IMR-90 (cell line): ENCODE measurements at regions of chr4 and their contacts with region 1.

Region 1: DNA sequence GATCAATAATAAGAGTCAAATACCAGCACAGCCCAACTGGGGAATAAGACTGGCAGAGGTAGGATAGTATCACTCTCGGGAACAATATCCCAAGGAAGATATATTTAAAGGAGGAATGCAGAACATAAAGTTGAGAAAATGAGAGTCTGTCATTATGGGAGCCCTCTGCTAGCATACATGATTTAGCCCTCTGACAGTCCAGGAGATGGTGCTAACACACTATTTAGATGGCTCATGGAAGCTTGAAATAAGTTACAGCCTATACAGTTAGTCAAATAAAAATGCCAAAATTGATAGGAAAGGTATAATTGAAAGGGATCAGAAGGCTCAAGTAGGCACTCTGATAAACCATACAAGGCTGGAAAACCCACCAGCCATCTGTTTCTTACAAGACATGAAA is 201.0 kb upstream of the NEIL3 start:
- DNase-seq: peak; percentile 68
- ATAC-seq: peak; percentile 99
- H3K4me3 ChIP-seq: no peak overlapping the region
- H3K27ac ChIP-seq: no peak overlapping the region
- H3K4me1 ChIP-seq: no peaks in the 10 kb centered on the region
- H3K27me3 ChIP-seq: no peaks in the 10 kb centered on the region
- CTCF ChIP-seq: peak; percentile 76
- POLR2A ChIP-seq: no peak
- RAD21 ChIP-seq: peak; percentile 79

Region 2: DNA sequence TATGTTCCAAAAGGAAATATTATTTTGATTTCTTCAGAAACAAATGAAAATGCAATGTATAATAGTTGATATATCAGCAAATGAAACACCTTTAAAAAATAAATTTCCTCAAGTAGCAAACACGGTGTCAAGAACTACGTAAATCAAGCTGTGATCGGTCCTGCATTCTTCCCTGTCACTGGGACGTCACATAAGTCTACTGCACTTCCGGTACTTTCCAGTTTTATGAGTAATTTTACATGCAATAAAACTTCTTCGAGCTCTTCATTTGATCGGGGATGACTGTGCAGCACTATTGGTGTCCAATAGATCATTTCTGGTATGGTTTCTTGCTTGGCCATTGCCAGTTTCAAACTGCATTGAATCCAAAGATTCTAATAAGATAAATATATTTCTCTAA is 202.0 kb before region 1 on chr4:
- CTCF ChIA-PET with region 1: no interaction called
- POLR2A ChIA-PET with region 1: no interaction called
- dilution Hi-C with region 1: no loop called
- in situ Hi-C with region 1: no loop called
- intact Hi-C with region 1: no loop called
- DNase-seq: no peak
- ATAC-seq: no peak
- H3K4me3 ChIP-seq: no peak overlapping the region
- H3K27ac ChIP-seq: 0 out of 2 replicates have a peak overlapping the region, but pooled peaks have one; percentile 3
- H3K4me1 ChIP-seq: peaks cover 6% of the 10 kb centered on the region; the same call in 1 of the 2 replicates
- H3K27me3 ChIP-seq: no peaks in the 10 kb centered on the region
- CTCF ChIP-seq: no peak
- POLR2A ChIP-seq: no peak
- RAD21 ChIP-seq: no peak

Region 3: GRCh38 chr4:177041356-177041755 is 67.4 kb before region 1 on chr4:
- CTCF ChIA-PET with region 1: no interaction called
- POLR2A ChIA-PET with region 1: no interaction called
- dilution Hi-C with region 1: no loop called
- in situ Hi-C with region 1: no loop called
- intact Hi-C with region 1: no loop called
- DNase-seq: no peak
- ATAC-seq: no peak
- H3K4me3 ChIP-seq: no peak overlapping the region
- H3K27ac ChIP-seq: no peak overlapping the region
- H3K4me1 ChIP-seq: no peaks in the 10 kb centered on the region
- H3K27me3 ChIP-seq: no peaks in the 10 kb centered on the region
- CTCF ChIP-seq: no peak
- POLR2A ChIP-seq: no peak
- RAD21 ChIP-seq: no peak

Region 4: DNA sequence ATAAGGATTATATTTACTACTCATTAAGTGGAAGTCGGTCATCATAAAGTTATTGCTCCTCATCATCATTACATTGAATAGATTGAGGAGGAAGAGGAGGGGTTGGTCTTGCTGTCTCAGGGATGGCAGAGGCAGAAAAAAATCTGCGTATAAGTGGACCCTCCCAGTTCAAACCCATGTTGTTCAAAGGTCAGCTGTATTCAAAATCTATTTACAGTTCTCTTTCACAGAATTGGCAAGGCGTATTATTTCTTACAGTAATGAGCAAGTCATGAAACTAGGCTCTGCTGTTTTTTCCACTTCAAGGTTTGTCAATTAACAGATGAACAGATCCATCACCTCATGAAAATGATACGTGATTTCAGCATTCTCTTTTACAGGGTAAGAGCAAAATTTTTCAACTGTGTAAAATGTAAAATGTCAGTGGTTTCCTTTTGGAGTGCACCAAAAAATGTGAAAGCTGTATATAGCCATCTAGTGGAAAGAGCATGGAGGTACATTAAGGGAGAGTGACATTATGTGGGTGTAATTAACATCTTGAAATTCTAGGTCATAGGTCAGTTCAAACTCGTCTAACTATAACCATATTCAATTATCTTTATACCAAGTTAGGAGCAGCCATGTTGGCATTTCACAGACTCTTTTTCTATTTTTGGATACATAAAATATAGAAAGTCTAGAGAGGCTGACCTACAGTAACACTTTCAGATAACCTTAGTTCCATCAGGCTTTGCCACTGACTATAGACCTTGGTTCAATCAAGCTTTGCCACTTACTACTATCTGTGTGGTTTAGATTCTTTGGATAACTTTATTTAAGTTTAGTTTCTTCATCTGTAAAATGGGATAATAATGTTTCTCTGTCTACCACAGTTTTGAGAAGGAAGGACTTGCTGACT is 231.0 kb after region 1 on chr4:
- CTCF ChIA-PET with region 1: interaction called, 5 read pairs
- POLR2A ChIA-PET with region 1: no interaction called
- dilution Hi-C with region 1: no loop called
- in situ Hi-C with region 1: loop called (anchors 10 kb)
- intact Hi-C with region 1: loop called (anchors 1 kb)
- DNase-seq: peak; percentile 51
- ATAC-seq: peak; percentile 84
- H3K4me3 ChIP-seq: no peak overlapping the region
- H3K27ac ChIP-seq: no peak overlapping the region; the same call in 1 of the 2 replicates
- H3K4me1 ChIP-seq: peaks cover 2% of the 10 kb centered on the region; the same call in 1 of the 2 replicates
- H3K27me3 ChIP-seq: no peaks in the 10 kb centered on the region
- CTCF ChIP-seq: peak; percentile 79
- POLR2A ChIP-seq: no peak
- RAD21 ChIP-seq: peak; percentile 80

Region 5: DNA sequence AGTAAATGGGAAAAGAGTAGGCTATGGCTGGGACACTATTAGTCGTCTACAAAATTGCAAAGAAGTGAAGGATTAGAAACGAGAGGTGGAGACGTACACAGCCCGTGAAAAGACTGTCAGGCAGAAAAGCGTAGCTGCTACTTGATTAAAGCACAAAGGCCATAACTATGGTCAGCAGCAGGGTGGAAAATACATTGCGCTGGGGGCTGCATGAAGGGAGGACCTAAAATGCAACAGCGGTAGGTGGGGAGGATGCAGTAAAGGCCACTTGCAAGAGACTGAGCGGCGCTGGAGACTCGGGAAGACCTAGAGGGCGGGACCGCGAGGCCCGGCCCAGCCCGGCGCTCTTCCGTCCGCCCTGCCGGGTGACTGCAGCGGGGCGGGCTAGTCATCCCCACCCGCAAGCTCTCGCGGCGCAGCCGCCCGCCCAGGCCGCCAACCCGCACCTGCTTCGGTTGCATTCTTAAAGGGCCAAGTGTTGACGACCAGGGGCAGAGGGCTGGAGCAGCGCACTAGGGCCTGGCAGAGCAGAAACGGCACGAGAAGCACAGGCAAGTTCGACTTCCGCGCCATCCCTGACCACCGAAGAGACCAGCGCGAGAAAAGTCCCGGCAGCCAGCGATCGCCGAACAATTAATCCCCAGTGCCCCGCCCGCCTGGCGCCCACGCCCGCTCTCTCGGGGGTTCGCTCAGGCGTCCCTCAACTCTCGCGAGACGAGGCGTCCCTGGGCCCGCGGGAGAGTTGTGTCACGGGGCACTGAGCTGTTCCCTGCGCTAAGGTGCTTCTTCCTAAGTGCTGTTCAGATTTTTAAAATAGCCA is 333.3 kb after region 1 on chr4 and contains the start of gene AGA:
- CTCF ChIA-PET with region 1: interaction called, 3 read pairs
- POLR2A ChIA-PET with region 1: no interaction called
- dilution Hi-C with region 1: no loop called
- in situ Hi-C with region 1: no loop called
- intact Hi-C with region 1: loop called (anchors 5 kb)
- DNase-seq: peak; percentile 93
- ATAC-seq: peak; percentile 98
- H3K4me3 ChIP-seq: peak within 1 kb of the TSS; percentile 87
- H3K27ac ChIP-seq: peak within 1 kb of the TSS; percentile 94
- H3K4me1 ChIP-seq: peaks cover 9% of the 10 kb centered on the region; the same call in 1 of the 2 replicates
- H3K27me3 ChIP-seq: no peaks in the 10 kb centered on the region
- CTCF ChIP-seq: no peak
- POLR2A ChIP-seq: peak; percentile 74; the same call in 1 of the 2 replicates
- RAD21 ChIP-seq: no peak; the same call in 1 of the 2 replicates
- total RNA-seq, gene AGA: 35.8 and 38.5 TPM in 2 replicates

Region 6: GRCh38 chr4:177546745-177547144 is 438.0 kb after region 1 on chr4:
- CTCF ChIA-PET with region 1: no interaction called
- POLR2A ChIA-PET with region 1: no interaction called
- dilution Hi-C with region 1: no loop called
- in situ Hi-C with region 1: loop called (anchors 25 kb)
- intact Hi-C with region 1: loop called (anchors 2 kb)
- DNase-seq: peak; percentile 26
- ATAC-seq: no peak
- H3K4me3 ChIP-seq: no peak overlapping the region
- H3K27ac ChIP-seq: no peak overlapping the region
- H3K4me1 ChIP-seq: no peaks in the 10 kb centered on the region
- H3K27me3 ChIP-seq: no peaks in the 10 kb centered on the region
- CTCF ChIP-seq: peak; percentile 32; the same call in 1 of the 2 replicates
- POLR2A ChIP-seq: no peak
- RAD21 ChIP-seq: peak; percentile 34; the same call in 1 of the 2 replicates

Region 7: GRCh38 chr4:177555007-177555574 is 446.4 kb after region 1 on chr4:
- CTCF ChIA-PET with region 1: no interaction called
- POLR2A ChIA-PET with region 1: no interaction called
- dilution Hi-C with region 1: no loop called
- in situ Hi-C with region 1: loop called (anchors 25 kb)
- intact Hi-C with region 1: no loop called
- DNase-seq: peak; percentile 50
- ATAC-seq: peak; percentile 68
- H3K4me3 ChIP-seq: no peak overlapping the region
- H3K27ac ChIP-seq: no peak overlapping the region
- H3K4me1 ChIP-seq: no peaks in the 10 kb centered on the region
- H3K27me3 ChIP-seq: no peaks in the 10 kb centered on the region
- CTCF ChIP-seq: peak; percentile 76
- POLR2A ChIP-seq: no peak
- RAD21 ChIP-seq: peak; percentile 85